Breast epithelium (tissue), 4 donors: ENCODE measurements at regions of chr2 and their contacts with region 1.

Region 1: GRCh38 chr2:112834396-112835037 is 2.1 kb downstream of the IL1B start:
- DNase-seq: no peak
- H3K4me3 ChIP-seq: no peak overlapping the region
- H3K27ac ChIP-seq: no peak overlapping the region
- H3K4me1 ChIP-seq: peaks cover 0 to 5% of the 10 kb centered on the region in 2 donors
- H3K27me3 ChIP-seq: peaks cover 0 to under 1% of the 10 kb centered on the region in 2 donors
- CTCF ChIP-seq: no peak
- POLR2A ChIP-seq: no peak

Region 2: DNA sequence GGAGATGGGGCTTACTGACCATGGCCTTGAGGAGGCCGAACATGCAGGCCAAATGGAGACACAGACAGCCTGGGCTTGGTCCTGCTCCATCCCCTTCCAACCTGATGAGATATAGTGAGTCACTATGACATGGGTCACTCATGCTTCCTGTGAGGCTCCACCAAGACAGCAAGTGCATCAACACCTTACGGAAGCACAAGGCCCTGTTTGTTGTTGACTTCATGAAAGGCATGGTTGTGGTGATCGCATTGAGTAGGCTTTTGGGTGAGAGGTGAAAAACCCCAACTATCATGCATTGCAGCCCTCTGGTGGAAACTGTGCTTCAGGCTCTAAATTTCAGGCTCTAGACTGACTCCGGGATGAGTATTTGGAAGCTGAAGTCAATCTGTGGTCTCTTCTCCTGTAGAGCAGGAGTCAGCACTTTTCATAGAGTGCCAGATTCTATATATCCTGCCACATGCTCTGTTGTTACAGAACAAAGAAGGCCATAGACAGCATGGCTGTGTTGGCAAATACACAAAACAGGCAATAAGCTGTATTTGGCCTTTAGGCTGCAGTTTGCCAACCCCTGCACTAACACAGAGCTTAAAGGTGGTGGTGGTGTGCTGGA is 86.5 kb after region 1 on chr2:
- intact Hi-C with region 1: no loop called
- DNase-seq: no peak
- H3K4me3 ChIP-seq: no peak overlapping the region
- H3K27ac ChIP-seq: no peak overlapping the region
- H3K4me1 ChIP-seq: no peaks in the 10 kb centered on the region
- H3K27me3 ChIP-seq: peaks cover 0 to 9% of the 10 kb centered on the region in 2 donors
- CTCF ChIP-seq: no peak
- POLR2A ChIP-seq: no peak

Region 3: GRCh38 chr2:113342650-113343049 is 508.1 kb after region 1 on chr2:
- intact Hi-C with region 1: loop called (anchors 5 kb)
- DNase-seq: no peak
- H3K4me3 ChIP-seq: no peak overlapping the region
- H3K27ac ChIP-seq: no peak overlapping the region
- H3K4me1 ChIP-seq: no peaks in the 10 kb centered on the region
- H3K27me3 ChIP-seq: no peaks in the 10 kb centered on the region
- CTCF ChIP-seq: no peak
- POLR2A ChIP-seq: no peak